Mammary epithelial cell (primary cell): ENCODE measurements at regions of chr4 and their contacts with region 1.

Region 1: DNA sequence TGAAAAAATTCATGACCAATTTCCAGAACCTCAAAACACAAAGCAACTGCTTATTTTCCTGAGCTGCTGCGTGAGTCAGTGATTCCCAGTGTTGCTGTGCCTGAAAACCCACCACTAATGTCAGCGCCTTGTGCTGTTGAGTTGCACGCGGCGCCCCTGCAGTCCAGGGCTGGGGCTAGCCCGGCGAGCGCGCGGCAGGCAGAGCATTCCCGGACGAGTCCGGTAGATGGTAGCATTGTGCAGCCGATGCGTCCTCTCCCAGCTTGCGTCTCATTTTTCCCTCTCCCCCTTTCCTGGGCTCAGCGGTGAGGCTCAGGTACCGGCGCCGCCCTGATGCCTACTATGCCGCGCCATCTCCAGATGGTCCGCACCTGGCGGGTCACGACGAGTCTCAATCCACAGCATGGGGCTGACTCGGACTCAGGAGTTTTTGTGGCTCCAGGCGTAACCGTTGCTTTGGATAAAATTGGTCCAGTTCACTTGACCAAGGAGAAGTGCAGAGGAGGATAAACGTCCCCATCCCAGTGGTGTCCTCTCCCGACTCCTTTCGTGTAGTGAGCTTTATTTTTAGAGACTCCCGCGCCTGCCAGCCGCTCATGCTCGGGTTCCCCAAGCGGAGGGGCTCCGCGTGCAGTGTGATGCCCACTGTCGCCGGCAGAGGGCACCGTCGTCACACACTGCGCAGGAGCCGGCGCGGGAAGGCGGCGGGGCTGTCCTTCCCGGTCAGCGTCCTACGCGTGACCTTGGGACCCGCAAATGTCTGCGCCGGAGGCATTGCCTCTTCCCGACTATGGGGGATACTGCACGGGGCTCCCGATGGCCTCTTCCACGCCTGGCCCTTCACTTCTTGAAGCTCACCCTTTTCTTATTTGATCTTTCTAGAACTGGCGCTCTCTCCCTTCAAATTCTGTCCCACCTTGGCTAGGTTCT is 53.6 kb upstream of the IGFBP7 start:
- DNase-seq: peak; percentile 74
- H3K4me3 ChIP-seq: peak overlapping the region; percentile 47 to 60 (median 50)
- H3K27ac ChIP-seq: peak overlapping the region; percentile 50
- H3K4me1 ChIP-seq: peaks cover 15% of the 10 kb centered on the region
- H3K27me3 ChIP-seq: no peaks in the 10 kb centered on the region
- CTCF ChIP-seq: peak; percentile 80 to 96

Region 2: DNA sequence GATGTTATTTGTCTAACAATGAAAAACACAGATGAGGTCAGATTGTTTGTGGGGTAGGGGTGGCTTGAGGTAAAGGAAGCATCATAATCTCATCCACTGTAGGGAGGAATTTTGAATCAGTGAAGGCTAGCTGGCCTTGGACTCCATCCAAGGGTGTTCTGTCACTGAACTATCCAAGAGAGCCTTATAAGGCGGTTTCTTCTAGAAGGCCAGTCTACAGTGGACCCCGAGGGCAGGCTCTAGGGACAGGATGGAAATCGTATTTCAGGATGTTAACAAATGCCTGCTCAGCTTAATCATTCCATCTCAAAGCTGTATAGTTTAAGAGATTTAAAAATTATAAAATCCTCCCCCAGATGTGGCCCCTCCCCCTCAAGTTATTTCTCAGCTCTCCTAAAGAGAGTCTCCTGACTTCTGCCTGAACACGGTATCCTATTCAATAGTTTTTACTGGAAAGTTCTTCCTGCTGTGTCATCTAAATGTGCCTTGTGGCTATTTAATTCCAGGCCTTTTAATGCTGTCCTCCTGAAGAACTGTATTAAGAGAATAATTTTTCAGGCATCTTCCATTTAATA is 61.7 kb before region 1 on chr4:
- CTCF ChIA-PET with region 1: no interaction called
- dilution Hi-C with region 1: no loop called
- in situ Hi-C with region 1: no loop called
- intact Hi-C with region 1: no loop called
- DNase-seq: peak; percentile 31
- H3K4me3 ChIP-seq: no peak overlapping the region
- H3K27ac ChIP-seq: no peak overlapping the region
- H3K4me1 ChIP-seq: peaks cover 18% of the 10 kb centered on the region
- H3K27me3 ChIP-seq: no peaks in the 10 kb centered on the region
- CTCF ChIP-seq: no peak

Region 3: GRCh38 chr4:57303012-57303751 is 139.4 kb after region 1 on chr4:
- CTCF ChIA-PET with region 1: no interaction called
- dilution Hi-C with region 1: no loop called
- in situ Hi-C with region 1: no loop called
- intact Hi-C with region 1: loop called (anchors 1 kb)
- DNase-seq: peak; percentile 56
- H3K4me3 ChIP-seq: no peak overlapping the region
- H3K27ac ChIP-seq: no peak overlapping the region
- H3K4me1 ChIP-seq: no peaks in the 10 kb centered on the region
- H3K27me3 ChIP-seq: peaks cover 3% of the 10 kb centered on the region
- CTCF ChIP-seq: peak in 1 of 2 donors; percentile 31

Region 4: GRCh38 chr4:57426779-57427395 is 263.1 kb after region 1 on chr4:
- CTCF ChIA-PET with region 1: interaction called, 3 read pairs
- dilution Hi-C with region 1: loop called (anchors 10 kb)
- in situ Hi-C with region 1: loop called (anchors 10 kb)
- intact Hi-C with region 1: loop called (anchors 1 kb)
- DNase-seq: peak; percentile 61
- H3K4me3 ChIP-seq: no peak overlapping the region
- H3K27ac ChIP-seq: no peak overlapping the region
- H3K4me1 ChIP-seq: peaks cover 30% of the 10 kb centered on the region
- H3K27me3 ChIP-seq: no peaks in the 10 kb centered on the region
- CTCF ChIP-seq: peak; percentile 66 to 85

Region 5: GRCh38 chr4:57442831-57443291 is 279.1 kb after region 1 on chr4:
- CTCF ChIA-PET with region 1: interaction called, 4 read pairs
- dilution Hi-C with region 1: loop called (anchors 10 kb)
- in situ Hi-C with region 1: no loop called
- intact Hi-C with region 1: loop called (anchors 1 kb)
- DNase-seq: peak; percentile 29
- H3K4me3 ChIP-seq: no peak overlapping the region
- H3K27ac ChIP-seq: no peak overlapping the region
- H3K4me1 ChIP-seq: no peaks in the 10 kb centered on the region
- H3K27me3 ChIP-seq: no peaks in the 10 kb centered on the region
- CTCF ChIP-seq: peak; percentile 81 to 94